ENCODE measurements at regions of chr2 and their contacts with region 1.

Region 1: GRCh38 chr2:210445116-210445707 is 31.3 kb downstream of the LANCL1 start:
- DNase-seq: peak in 2 of 9 experiments; percentile 4 to 30
- ATAC-seq: no peak
- H3K4me3 ChIP-seq: no peak overlapping the region
- H3K4me3 Mint-ChIP-seq: no peak overlapping the region
- H3K27ac ChIP-seq: no peak overlapping the region
- H3K27ac Mint-ChIP-seq: no peak overlapping the region
- H3K4me1 ChIP-seq: no peaks in the 10 kb centered on the region
- H3K4me1 Mint-ChIP-seq: peaks cover 22% of the 10 kb centered on the region
- H3K27me3 ChIP-seq: no peaks in the 10 kb centered on the region
- H3K27me3 Mint-ChIP-seq: no peaks in the 10 kb centered on the region
- CTCF ChIP-seq: peak; percentile 88

Region 2: GRCh38 chr2:210288408-210288807 is 156.8 kb before region 1 on chr2:
- CTCF ChIA-PET with region 1: no interaction called
- POLR2A ChIA-PET with region 1: no interaction called
- intact Hi-C with region 1: no loop called
- DNase-seq: no peak
- ATAC-seq: no peak
- H3K4me3 ChIP-seq: no peak overlapping the region
- H3K4me3 Mint-ChIP-seq: no peak overlapping the region
- H3K27ac ChIP-seq: no peak overlapping the region
- H3K27ac Mint-ChIP-seq: no peak overlapping the region
- H3K4me1 ChIP-seq: no peaks in the 10 kb centered on the region
- H3K4me1 Mint-ChIP-seq: no peaks in the 10 kb centered on the region
- H3K27me3 ChIP-seq: no peaks in the 10 kb centered on the region
- H3K27me3 Mint-ChIP-seq: peaks cover 4% of the 10 kb centered on the region
- CTCF ChIP-seq: no peak

Region 3: GRCh38 chr2:210356944-210357343 is 88.3 kb before region 1 on chr2:
- CTCF ChIA-PET with region 1: no interaction called
- POLR2A ChIA-PET with region 1: no interaction called
- intact Hi-C with region 1: no loop called
- DNase-seq: no peak
- ATAC-seq: no peak
- H3K4me3 ChIP-seq: no peak overlapping the region
- H3K4me3 Mint-ChIP-seq: no peak overlapping the region
- H3K27ac ChIP-seq: no peak overlapping the region
- H3K27ac Mint-ChIP-seq: no peak overlapping the region
- H3K4me1 ChIP-seq: no peaks in the 10 kb centered on the region
- H3K4me1 Mint-ChIP-seq: no peaks in the 10 kb centered on the region
- H3K27me3 ChIP-seq: no peaks in the 10 kb centered on the region
- H3K27me3 Mint-ChIP-seq: no peaks in the 10 kb centered on the region
- CTCF ChIP-seq: no peak

Region 4: DNA sequence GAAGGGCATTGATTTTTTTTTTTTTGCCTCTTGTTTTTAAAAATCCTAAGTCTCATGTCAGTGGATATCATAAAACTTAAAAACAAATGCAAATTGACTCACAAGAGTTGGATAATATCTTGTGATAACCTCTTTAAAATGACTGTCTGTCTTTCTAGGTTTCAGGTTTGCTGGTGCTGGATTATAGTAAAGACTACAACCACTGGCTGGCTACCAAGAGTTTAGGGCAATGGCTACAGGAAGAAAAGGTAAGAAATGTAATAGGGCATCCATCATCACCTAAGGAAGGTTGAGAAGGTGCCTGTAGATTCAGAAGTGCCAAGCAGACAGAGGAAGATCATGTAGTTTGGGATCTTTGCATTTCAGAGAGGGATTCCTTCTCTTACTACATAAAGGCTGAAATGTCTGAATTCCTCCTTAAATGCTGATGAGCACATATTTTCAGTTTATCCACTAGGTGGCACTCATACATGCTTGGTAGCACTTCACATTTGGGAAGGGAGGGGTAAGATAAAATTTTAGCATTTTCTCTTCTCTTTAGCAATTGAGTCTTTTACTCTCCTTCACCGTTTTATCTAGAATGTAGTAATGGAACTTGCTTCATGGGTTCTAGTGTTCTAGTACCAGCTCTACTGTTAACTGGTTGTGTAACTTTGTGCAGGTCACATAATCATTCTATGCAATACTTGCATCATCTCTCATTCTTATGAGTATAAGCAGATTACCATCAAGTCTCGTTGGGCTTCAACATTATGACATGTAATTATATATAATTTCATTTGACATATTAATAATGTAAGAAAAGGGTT is 132.3 kb after region 1 on chr2:
- CTCF ChIA-PET with region 1: no interaction called
- POLR2A ChIA-PET with region 1: no interaction called
- intact Hi-C with region 1: loop called in 1 of 2 experiments (anchors 10 kb)
- DNase-seq: peak in 2 of 9 experiments; percentile 24 to 43
- ATAC-seq: no peak
- H3K4me3 ChIP-seq: no peak overlapping the region
- H3K4me3 Mint-ChIP-seq: no peak overlapping the region
- H3K27ac ChIP-seq: no peak overlapping the region
- H3K27ac Mint-ChIP-seq: no peak overlapping the region
- H3K4me1 ChIP-seq: no peaks in the 10 kb centered on the region
- H3K4me1 Mint-ChIP-seq: no peaks in the 10 kb centered on the region
- H3K27me3 ChIP-seq: no peaks in the 10 kb centered on the region
- H3K27me3 Mint-ChIP-seq: no peaks in the 10 kb centered on the region
- CTCF ChIP-seq: peak; percentile 70

Region 5: DNA sequence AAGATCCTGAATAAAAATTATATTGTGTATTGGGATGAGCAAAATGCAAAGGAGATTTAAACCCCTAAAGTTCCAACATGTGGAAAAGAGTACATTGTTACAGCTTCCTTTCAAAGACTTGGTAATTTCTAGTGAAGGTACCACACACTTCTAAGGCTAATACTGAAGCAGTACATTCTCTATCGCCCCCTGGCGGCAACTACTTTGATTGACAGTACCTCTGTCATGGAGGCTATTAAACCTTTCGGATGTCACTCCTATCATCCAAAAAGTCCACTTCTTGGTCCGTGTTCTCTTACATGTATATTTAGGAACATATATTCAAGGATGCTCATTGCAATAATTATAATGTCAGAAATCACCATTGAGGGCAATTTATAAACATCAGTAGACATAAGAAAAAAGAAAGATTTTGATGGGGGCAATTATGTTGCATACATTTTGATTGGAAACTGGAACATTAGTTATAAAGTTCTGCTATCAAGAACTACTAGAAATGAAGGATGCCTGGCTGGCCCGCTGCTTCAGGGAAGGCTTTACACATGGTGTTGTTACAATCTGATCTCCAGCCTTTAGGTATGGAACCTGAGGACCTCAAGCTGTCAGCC is 712.7 kb after region 1 on chr2:
- CTCF ChIA-PET with region 1: no interaction called
- POLR2A ChIA-PET with region 1: no interaction called
- intact Hi-C with region 1: loop called in 1 of 2 experiments (anchors 2 kb)
- DNase-seq: peak; percentile 8 to 69 (median 48)
- ATAC-seq: peak; percentile 48
- H3K4me3 ChIP-seq: no peak overlapping the region
- H3K4me3 Mint-ChIP-seq: no peak overlapping the region
- H3K27ac ChIP-seq: no peak overlapping the region
- H3K27ac Mint-ChIP-seq: no peak overlapping the region
- H3K4me1 ChIP-seq: no peaks in the 10 kb centered on the region
- H3K4me1 Mint-ChIP-seq: no peaks in the 10 kb centered on the region
- H3K27me3 ChIP-seq: no peaks in the 10 kb centered on the region
- H3K27me3 Mint-ChIP-seq: no peaks in the 10 kb centered on the region
- CTCF ChIP-seq: peak; percentile 77

Measured in CD8-positive, alpha-beta T cell (primary cell).